Dorsolateral prefrontal cortex (tissue), 120 donors: ENCODE measurements at regions of chr22 and their contacts with region 1.

Region 1: GRCh38 chr22:50030297-50031188 is 18.0 kb upstream of the IL17REL start:
- DNase-seq: peak; percentile 48 to 83 (median 72)
- H3K4me3 ChIP-seq: peak overlapping the region in 52 of 59 donors; percentile 12 to 57 (median 37)
- H3K27ac ChIP-seq: no peak overlapping the region
- H3K27me3 ChIP-seq: peaks cover 0 to 8% (median 0%) of the 10 kb centered on the region in 45 donors
- CTCF ChIP-seq: peak; percentile 60 to 97 (median 90)

Region 2: DNA sequence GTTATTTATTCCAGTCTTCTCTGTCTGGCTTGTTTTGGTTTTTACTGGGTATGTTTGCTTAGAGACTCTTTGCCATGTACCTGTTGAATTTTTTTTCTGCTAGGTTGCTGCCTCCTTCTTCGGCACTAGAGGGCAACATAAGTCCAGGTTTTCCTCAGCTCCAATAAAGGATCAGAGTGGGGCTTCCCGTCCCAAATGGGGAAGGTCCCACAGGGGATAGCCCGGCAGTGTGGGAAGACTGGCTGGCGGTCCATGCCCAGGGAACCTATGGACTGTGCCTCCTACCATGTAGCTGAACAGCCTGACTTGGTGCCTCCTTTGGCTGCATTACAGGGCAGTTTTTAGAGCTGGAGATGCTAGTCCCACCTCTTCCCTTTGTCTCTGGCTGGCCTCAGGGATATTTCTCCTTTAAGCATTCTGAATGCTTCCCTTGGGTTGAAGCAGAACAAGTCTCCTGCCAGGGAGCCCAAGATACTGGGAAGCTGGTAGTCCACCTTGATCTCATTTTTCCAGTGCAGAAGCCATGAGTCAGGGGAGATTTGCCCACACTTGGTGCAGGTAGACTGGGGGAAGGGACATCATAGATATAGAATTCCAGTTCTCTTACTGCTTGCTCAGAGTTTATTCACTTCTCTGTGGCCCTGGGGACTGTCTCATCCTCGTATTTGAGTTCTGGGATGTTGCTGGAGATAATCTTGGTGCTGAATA is 263.0 kb before region 1 on chr22:
- intact Hi-C with region 1: loop called in 1 of 2 experiments (anchors 10 kb)
- DNase-seq: peak in 3 of 10 donors; percentile 26 to 37 (median 30)
- H3K4me3 ChIP-seq: no peak overlapping the region
- H3K27ac ChIP-seq: no peak overlapping the region
- H3K27me3 ChIP-seq: no peaks in the 10 kb centered on the region
- CTCF ChIP-seq: peak in 49 of 56 donors; percentile 23 to 62 (median 45)

Region 3: GRCh38 chr22:49930739-49931412 is 99.7 kb before region 1 on chr22:
- intact Hi-C with region 1: loop called (anchors 1 to 2 kb)
- DNase-seq: peak; percentile 41 to 86 (median 76)
- H3K4me3 ChIP-seq: no peak overlapping the region
- H3K27ac ChIP-seq: peak overlapping the region in 55 of 59 donors; percentile 7 to 86 (median 65)
- H3K27me3 ChIP-seq: no peaks in the 10 kb centered on the region
- CTCF ChIP-seq: peak; percentile 22 to 83 (median 74)

Region 4: DNA sequence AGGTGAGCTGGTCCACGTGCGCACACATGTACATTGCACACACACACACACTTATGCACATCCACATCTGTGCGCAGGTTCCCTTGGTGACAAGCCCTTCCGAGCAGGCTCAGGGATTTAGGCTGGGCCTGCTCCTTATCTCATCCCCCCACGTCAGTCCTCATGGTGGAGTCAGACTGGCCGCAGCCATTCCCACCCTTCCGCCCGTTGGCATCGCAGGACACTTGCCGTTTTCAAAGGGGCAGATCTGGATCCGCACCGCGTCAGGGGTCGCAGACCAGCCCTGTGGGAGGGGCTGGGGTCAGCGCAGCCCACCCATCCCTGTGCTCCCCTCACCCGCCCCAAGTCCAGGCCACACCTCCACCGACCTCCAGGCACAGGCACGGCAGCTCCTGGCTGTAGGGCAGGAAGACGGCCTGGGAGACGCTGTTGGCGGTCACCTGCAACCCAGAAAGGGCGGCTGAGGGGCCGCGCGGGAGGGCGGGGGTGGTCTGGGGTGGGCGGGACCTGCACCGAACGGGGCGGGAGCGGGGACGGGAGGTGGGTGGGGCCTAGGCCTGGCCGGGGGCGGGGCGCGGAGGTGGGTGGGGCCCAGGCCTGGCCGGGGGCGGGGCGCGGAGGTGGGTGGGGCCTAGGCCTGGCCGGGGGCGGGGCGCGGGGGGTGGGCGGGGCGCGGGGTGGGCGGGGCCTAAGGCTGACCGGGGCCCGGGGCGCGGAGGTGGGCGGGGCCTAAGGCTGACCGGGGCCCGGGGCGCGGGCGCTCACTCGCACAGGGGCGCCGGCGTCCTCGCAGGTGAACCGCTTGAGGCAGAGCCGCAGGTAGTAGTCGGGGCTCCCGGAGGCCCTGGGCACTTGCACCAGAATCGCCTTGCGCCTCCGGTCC is 31.2 kb before region 1 on chr22:
- intact Hi-C with region 1: loop called (anchors 5 kb)
- DNase-seq: peak in 1 of 10 donors; percentile 30
- H3K4me3 ChIP-seq: peak overlapping the region in 8 of 59 donors; percentile 6 to 51 (median 27)
- H3K27ac ChIP-seq: no peak overlapping the region
- H3K27me3 ChIP-seq: peaks cover 0 to 17% (median 4%) of the 10 kb centered on the region in 45 donors
- CTCF ChIP-seq: no peak

Region 5: DNA sequence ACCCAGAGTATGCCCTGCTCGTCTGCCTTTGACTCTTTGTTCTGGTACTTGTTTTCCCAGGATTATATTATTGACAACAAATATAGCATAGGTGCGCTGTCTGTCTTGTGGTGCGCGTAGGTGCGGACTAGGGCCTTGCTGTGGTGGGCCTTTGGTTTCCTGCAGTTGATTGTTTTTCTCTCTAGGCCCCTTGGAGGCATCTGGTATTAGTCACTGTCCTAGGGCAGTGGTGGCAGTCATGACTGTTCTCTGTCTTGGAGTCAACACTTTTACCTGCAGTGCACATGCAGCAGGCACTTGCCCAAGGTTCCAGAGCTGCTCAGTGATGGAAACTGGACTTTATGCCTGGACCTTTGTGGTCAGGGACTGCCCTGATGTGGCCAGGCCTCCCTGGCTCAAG is 331.1 kb after region 1 on chr22:
- intact Hi-C with region 1: no loop called
- DNase-seq: no peak
- H3K4me3 ChIP-seq: no peak overlapping the region
- H3K27ac ChIP-seq: peak overlapping the region in 54 of 59 donors; percentile 9 to 85 (median 62)
- H3K27me3 ChIP-seq: no peaks in the 10 kb centered on the region
- CTCF ChIP-seq: no peak